Adrenal gland (tissue), 19 donors: ENCODE measurements at regions of chr20 and their contacts with region 1.

Region 1: DNA sequence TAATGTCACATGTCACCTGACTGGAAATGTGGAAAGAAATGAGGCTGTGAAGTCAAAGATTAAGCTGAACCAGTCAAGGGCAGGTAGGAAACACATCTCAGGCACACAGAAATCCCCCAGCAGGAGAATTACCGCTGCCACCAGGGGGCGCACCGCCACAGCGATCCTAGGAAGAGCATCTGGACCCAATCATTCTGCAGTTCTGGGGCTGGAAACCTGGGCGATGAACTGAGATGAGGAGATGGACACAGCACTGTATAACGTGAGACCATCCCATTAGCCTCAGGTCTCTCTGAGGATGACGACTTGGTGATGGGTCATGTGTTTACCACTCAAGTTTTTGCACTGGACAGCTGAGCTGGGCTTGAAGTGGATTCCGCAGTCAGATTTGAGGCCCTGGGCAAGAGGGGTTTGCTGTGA is 6.5 kb upstream of the SLC24A3 start:
- DNase-seq: peak; percentile 63 to 87 (median 78)
- H3K4me3 ChIP-seq: no peak overlapping the region
- H3K27ac ChIP-seq: no peak overlapping the region
- H3K4me1 ChIP-seq: no peaks in the 10 kb centered on the region
- H3K27me3 ChIP-seq: peaks cover 5% of the 10 kb centered on the region
- CTCF ChIP-seq: peak; percentile 80 to 94 (median 88)
- POLR2A ChIP-seq: no peak

Region 2: GRCh38 chr20:18904624-18905023 is 301.4 kb before region 1 on chr20:
- intact Hi-C with region 1: loop called in 1 of 2 experiments (anchors 10 kb)
- DNase-seq: peak; percentile 22 to 54 (median 40)
- H3K4me3 ChIP-seq: no peak overlapping the region
- H3K27ac ChIP-seq: no peak overlapping the region
- H3K4me1 ChIP-seq: no peaks in the 10 kb centered on the region
- H3K27me3 ChIP-seq: no peaks in the 10 kb centered on the region
- CTCF ChIP-seq: peak; percentile 20 to 58 (median 50)
- POLR2A ChIP-seq: no peak

Region 3: DNA sequence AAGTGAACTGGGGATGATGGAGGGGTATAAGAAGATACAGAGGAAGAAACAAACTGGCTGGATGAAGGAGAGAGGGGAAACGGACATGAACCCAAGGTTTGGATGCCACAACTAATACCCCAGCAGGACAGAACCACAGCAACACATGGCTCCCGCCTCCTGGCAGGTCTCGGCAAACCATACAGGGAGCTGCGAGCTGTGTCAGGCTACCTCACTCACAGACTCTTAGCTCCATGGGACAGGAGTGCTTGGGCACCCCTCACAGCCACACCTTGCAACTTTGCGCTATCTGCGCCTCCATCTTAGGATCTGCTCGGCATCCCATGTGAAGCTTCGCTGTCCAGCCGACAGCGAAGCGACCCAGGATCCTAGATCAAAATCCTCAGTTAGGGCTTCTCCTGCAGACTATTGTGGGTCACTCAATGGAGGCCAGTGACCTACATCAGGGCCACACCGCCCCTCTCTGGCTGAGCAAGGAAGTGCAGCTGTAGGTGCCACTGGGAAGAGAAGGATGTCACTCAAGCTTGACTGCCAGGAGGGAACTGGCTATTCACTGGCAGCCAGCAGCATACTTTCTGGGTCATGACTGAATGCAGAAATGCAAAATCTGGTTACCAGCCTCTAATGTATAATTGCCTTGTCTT is 377.7 kb after region 1 on chr20:
- intact Hi-C with region 1: loop called (anchors 2 to 5 kb)
- DNase-seq: peak; percentile 62 to 88 (median 78)
- H3K4me3 ChIP-seq: no peak overlapping the region
- H3K27ac ChIP-seq: no peak overlapping the region
- H3K4me1 ChIP-seq: no peaks in the 10 kb centered on the region
- H3K27me3 ChIP-seq: no peaks in the 10 kb centered on the region
- CTCF ChIP-seq: peak; percentile 85 to 92 (median 88)
- POLR2A ChIP-seq: no peak

Region 4: GRCh38 chr20:19661717-19662636 is 456.0 kb after region 1 on chr20:
- intact Hi-C with region 1: loop called (anchors 5 kb)
- DNase-seq: peak; percentile 53 to 87 (median 73)
- H3K4me3 ChIP-seq: no peak overlapping the region
- H3K27ac ChIP-seq: no peak overlapping the region
- H3K4me1 ChIP-seq: no peaks in the 10 kb centered on the region
- H3K27me3 ChIP-seq: peaks cover 10% of the 10 kb centered on the region
- CTCF ChIP-seq: peak; percentile 94 to 100 (median 97)
- POLR2A ChIP-seq: no peak